T-cell (primary cell): ENCODE measurements at regions of chr14 and their contacts with region 1.

Region 1: DNA sequence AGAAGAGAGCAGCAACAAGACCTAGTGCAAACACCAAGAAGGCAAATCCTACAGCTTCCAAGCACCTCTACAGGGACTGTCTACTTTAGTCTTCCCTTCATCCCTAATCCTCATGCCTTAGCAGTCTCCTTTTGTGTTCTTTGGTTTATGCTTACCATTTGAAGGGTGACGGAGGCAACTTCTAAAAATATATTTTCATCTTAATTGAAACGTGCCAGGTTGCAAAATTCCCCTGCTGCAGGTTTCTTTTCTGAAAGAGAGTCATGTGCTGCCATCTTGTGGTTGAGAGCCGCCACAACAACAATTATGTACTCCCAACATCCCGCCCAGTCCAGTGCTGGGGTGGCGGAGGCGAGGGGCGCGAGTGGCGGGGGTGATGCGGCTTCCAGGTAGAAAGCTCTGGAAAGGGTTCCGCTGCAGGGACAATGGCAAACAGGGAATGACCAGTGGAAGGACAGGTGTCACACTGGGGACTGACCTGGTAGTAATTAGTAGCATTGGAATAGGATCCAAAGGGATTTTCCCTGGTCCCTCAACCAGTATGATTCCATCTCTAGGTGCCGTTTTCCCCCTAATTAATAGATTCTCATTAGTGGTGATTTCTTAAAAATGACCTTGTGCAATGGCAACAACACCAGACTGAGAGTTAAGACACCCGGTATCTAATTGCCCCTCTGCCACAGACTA is 80.3 kb upstream of the GNG2 start:
- DNase-seq: peak; percentile 34 to 88 (median 63)
- ATAC-seq: peak; percentile 63 to 75 (median 68)
- H3K4me3 ChIP-seq: no peak overlapping the region
- H3K4me3 Mint-ChIP-seq: peak overlapping the region in 1 of 3 donors; percentile 43
- H3K27ac ChIP-seq: no peak overlapping the region
- H3K27ac Mint-ChIP-seq: no peak overlapping the region
- H3K4me1 ChIP-seq: peaks cover 8 to 10% of the 10 kb centered on the region in 2 experiments
- H3K4me1 Mint-ChIP-seq: peaks cover 22 to 32% (median 24%) of the 10 kb centered on the region in 3 donors
- H3K27me3 ChIP-seq: peaks cover 0 to 5% of the 10 kb centered on the region in 2 experiments
- H3K27me3 Mint-ChIP-seq: peaks cover 12 to 28% of the 10 kb centered on the region in 2 donors

Region 2: DNA sequence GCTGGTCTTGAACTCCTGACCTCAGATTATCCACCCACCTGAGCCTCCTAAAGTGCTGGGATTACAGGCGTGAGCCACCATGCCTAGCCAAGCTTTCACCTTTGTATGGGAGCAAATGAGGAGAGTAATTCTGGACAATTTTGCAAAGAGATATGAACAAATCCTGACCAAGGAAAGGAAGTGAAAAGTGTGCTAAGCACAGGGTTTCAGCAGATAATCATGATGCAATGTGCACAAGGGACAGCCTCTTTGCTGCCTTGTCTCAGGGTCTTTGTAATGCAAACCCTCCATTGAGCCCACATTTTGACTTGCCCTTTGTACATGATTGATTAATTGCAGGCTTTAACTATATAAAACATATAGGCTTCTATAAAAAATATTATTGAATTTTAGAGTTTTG is 826.7 kb before region 1 on chr14:
- CTCF ChIA-PET with region 1: interaction called in 1 of 2 experiments, 11 read pairs
- POLR2A ChIA-PET with region 1: no interaction called
- DNase-seq: no peak
- ATAC-seq: no peak
- H3K4me3 ChIP-seq: no peak overlapping the region
- H3K4me3 Mint-ChIP-seq: no peak overlapping the region
- H3K27ac ChIP-seq: no peak overlapping the region
- H3K27ac Mint-ChIP-seq: no peak overlapping the region
- H3K4me1 ChIP-seq: no peaks in the 10 kb centered on the region
- H3K4me1 Mint-ChIP-seq: no peaks in the 10 kb centered on the region
- H3K27me3 ChIP-seq: peaks cover 0 to 8% of the 10 kb centered on the region in 2 experiments
- H3K27me3 Mint-ChIP-seq: no peaks in the 10 kb centered on the region

Region 3: GRCh38 chr14:51283402-51284085 is 496.6 kb before region 1 on chr14:
- CTCF ChIA-PET with region 1: interaction called, 6 to 15 read pairs
- POLR2A ChIA-PET with region 1: no interaction called
- DNase-seq: peak in 1 of 35 experiments; percentile 60
- ATAC-seq: peak in 1 of 4 experiments; percentile 50
- H3K4me3 ChIP-seq: no peak overlapping the region
- H3K4me3 Mint-ChIP-seq: no peak overlapping the region
- H3K27ac ChIP-seq: no peak overlapping the region
- H3K27ac Mint-ChIP-seq: no peak overlapping the region
- H3K4me1 ChIP-seq: no peaks in the 10 kb centered on the region
- H3K4me1 Mint-ChIP-seq: no peaks in the 10 kb centered on the region
- H3K27me3 ChIP-seq: no peaks in the 10 kb centered on the region
- H3K27me3 Mint-ChIP-seq: no peaks in the 10 kb centered on the region

Region 4: GRCh38 chr14:51979088-51979709 is 199.1 kb after region 1 on chr14:
- CTCF ChIA-PET with region 1: interaction called in 1 of 2 experiments, 10 read pairs
- POLR2A ChIA-PET with region 1: no interaction called
- DNase-seq: peak; percentile 41 to 89 (median 75)
- ATAC-seq: peak; percentile 67 to 86 (median 78)
- H3K4me3 ChIP-seq: no peak overlapping the region
- H3K4me3 Mint-ChIP-seq: no peak overlapping the region
- H3K27ac ChIP-seq: no peak overlapping the region
- H3K27ac Mint-ChIP-seq: no peak overlapping the region
- H3K4me1 ChIP-seq: peaks cover 2 to 6% of the 10 kb centered on the region in 2 experiments
- H3K4me1 Mint-ChIP-seq: peaks cover 5 to 6% (median 6%) of the 10 kb centered on the region in 3 donors
- H3K27me3 ChIP-seq: peaks cover 0 to 2% of the 10 kb centered on the region in 2 experiments
- H3K27me3 Mint-ChIP-seq: no peaks in the 10 kb centered on the region

Region 5: DNA sequence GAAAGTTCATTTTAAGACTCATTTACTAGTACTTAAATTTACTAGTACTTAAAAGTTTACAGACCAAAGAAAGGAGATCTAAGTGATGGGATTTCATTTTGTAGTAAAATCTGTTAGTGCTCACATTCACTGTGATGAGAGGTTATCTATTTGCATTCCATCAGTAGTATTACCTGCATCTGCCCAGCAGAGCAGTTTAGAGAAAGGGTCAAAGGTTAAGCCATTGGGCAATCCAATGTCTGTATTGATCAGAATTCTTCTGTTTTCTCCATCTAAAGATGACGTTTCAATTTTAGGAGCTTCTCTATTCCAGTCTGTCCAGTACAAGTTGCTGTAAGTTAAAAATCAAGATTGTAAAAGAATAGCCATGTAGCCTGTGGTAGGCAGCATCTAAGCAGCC is 227.5 kb after region 1 on chr14:
- CTCF ChIA-PET with region 1: no interaction called
- POLR2A ChIA-PET with region 1: no interaction called
- DNase-seq: no peak
- ATAC-seq: no peak
- H3K4me3 ChIP-seq: no peak overlapping the region
- H3K4me3 Mint-ChIP-seq: no peak overlapping the region
- H3K27ac ChIP-seq: no peak overlapping the region
- H3K27ac Mint-ChIP-seq: peak overlapping the region in 1 of 2 donors; percentile 17
- H3K4me1 ChIP-seq: no peaks in the 10 kb centered on the region
- H3K4me1 Mint-ChIP-seq: peaks cover 0 to 5% (median 0%) of the 10 kb centered on the region in 3 donors
- H3K27me3 ChIP-seq: no peaks in the 10 kb centered on the region
- H3K27me3 Mint-ChIP-seq: no peaks in the 10 kb centered on the region